Activated B cell treated with CpG ODN at 0.5 μM for 24 hours (primary cell): ENCODE measurements at regions of chr5 and their contacts with region 1.

Region 1: DNA sequence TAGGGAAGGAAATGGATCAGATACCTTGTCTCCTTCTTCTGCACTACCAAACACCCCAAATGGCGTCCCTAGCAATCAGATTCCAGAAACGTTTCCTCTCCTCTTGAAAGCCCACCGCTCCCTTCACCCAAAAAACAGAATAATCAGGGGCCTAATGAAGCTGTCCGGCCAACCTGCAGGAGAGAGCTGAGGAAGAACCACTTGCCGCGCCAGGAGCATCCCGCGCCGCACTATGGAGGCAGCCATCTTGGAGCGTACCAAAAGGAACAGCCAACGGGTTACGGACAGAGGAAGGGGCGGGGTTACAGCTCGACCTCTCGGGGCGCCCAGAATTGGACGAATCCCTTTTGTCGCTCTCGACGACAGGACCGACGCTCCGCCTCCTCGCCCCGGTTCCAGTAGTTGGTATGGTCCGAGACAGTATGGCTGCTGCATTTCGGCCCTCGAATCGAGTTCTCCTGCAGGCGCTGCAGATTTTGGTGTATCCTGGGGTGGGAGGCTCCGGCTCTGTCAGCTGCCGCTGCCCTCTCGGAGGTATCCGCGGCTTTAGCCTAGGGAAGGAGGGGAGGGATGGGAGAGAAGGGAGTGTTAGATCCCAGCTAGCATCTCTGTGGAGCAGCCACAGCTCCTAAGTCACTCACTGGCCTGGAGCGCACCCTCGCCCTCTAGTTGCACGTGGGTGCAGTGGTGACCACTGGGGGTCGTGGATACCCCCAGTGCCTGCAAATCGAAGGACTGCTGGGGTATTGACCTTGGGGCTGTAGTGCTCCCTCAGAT is at the starts of genes MRPS27 and PTCD2:
- DNase-seq: peak; percentile 79
- ATAC-seq: peak; percentile 99
- H3K4me3 Mint-ChIP-seq: peak within 1 kb of the TSS; percentile 98
- H3K27ac Mint-ChIP-seq: peak within 1 kb of the TSS; percentile 93
- H3K4me1 Mint-ChIP-seq: peaks cover 25% of the 10 kb centered on the region
- H3K27me3 Mint-ChIP-seq: no peaks in the 10 kb centered on the region
- CTCF ChIP-seq: no peak
- total RNA-seq, gene MRPS27: 69.2 and 71.6 TPM in 2 replicates
- total RNA-seq, gene PTCD2: 6.2 and 8.9 TPM in 2 replicates

Region 2: DNA sequence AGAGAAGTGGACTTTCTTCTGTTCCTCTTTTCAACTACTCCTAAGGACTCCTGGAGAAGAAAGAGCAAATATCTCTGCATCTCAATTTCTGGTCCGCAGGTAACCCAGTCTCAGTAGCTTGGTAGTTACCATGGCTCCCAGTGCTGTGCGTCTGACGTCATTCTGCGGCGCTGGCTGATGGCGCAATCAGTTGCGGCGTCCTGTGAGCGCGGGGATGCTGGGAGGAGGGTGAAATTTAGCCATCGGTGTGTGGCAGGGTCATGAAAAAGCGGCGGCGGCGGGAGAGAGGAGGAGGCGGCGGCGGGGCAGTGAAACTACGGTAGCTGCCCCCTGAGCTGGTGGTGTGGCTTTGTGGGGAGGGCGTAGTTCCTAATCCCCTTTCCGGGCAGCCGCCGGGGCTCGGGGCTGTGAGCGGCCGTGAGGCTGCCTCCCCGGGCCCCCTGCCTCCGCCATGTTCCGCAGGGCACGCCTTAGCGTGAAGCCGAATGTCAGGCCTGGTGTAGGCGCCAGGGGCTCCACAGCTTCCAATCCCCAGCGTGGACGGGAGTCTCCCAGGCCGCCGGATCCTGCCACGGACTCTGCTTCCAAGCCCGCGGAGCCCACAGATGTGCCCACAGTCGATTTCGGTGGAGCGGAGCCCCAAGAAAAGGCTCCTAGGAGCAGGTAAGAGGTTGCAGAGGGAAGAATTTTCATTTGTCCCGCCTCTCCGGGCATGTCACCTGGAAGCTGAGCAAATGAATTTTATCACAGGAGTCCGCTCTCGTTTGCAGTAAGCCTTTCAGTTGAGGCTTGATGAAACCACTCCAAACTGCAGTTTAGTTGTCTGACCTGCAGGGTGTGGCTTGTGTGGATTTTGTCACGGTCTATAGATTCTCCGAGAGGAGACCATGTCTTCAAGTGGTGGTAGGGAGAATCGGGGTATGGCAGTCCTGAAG is 864.5 kb before region 1 on chr5 and contains the start of gene BDP1:
- CTCF ChIA-PET with region 1: no interaction called
- POLR2A ChIA-PET with region 1: no interaction called
- intact Hi-C with region 1: loop called (anchors 5 kb)
- DNase-seq: peak; percentile 96
- ATAC-seq: peak; percentile 84
- H3K4me3 Mint-ChIP-seq: peak within 1 kb of the TSS; percentile 97
- H3K27ac Mint-ChIP-seq: peak within 1 kb of the TSS; percentile 97
- H3K4me1 Mint-ChIP-seq: peaks cover 23% of the 10 kb centered on the region
- H3K27me3 Mint-ChIP-seq: peaks cover 7% of the 10 kb centered on the region
- CTCF ChIP-seq: no peak
- total RNA-seq, gene BDP1: 46.2 and 50.4 TPM in 2 replicates

Region 3: DNA sequence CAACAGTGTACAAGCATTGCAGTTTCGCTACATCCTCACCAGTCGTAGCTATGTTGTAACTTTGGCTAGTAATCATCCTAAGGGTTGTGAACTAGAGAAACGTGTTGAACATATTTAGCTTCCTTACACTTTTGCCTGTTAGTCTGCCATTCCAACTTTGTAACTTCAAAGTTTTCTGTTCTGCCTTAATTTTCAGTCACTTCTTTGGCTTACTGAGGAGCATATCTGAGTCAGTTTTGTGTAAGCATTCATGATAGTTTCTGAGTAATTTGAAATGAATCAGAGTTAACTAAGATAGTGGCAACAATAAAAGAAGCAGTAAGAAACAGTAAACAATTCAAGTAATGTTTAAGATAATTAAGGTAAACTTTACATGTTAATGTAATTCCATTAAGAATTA is 792.0 kb before region 1 on chr5:
- CTCF ChIA-PET with region 1: no interaction called
- POLR2A ChIA-PET with region 1: interaction called, 10 read pairs
- intact Hi-C with region 1: no loop called
- DNase-seq: no peak
- ATAC-seq: no peak
- H3K4me3 Mint-ChIP-seq: no peak overlapping the region
- H3K27ac Mint-ChIP-seq: no peak overlapping the region
- H3K4me1 Mint-ChIP-seq: no peaks in the 10 kb centered on the region
- H3K27me3 Mint-ChIP-seq: no peaks in the 10 kb centered on the region
- CTCF ChIP-seq: no peak

Region 4: DNA sequence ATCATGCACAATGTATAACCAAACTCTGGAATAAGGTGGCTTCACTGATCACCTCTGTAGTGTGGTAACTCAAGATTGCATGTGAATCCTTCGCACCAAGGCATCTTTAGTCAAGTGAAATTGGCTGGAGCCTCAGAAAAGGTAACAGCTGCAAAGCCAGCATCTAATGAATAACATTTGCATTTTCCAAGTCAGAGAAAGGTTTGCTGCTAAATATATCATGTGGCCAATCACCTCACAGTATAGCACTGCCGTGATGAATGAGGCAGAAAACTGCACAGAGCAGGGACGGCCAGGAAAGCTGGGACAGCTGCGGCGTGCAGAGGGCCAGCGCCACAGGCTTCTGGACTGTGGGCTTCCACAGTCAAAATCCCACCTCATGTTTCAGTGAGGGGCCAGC is 18.6 kb before region 1 on chr5:
- CTCF ChIA-PET with region 1: interaction called, 3 read pairs
- POLR2A ChIA-PET with region 1: interaction called, 15 read pairs
- intact Hi-C with region 1: no loop called
- DNase-seq: no peak
- ATAC-seq: peak; percentile 62
- H3K4me3 Mint-ChIP-seq: peak overlapping the region; percentile 29
- H3K27ac Mint-ChIP-seq: peak overlapping the region; percentile 14
- H3K4me1 Mint-ChIP-seq: peaks cover 93% of the 10 kb centered on the region
- H3K27me3 Mint-ChIP-seq: no peaks in the 10 kb centered on the region
- CTCF ChIP-seq: no peak

Region 5: DNA sequence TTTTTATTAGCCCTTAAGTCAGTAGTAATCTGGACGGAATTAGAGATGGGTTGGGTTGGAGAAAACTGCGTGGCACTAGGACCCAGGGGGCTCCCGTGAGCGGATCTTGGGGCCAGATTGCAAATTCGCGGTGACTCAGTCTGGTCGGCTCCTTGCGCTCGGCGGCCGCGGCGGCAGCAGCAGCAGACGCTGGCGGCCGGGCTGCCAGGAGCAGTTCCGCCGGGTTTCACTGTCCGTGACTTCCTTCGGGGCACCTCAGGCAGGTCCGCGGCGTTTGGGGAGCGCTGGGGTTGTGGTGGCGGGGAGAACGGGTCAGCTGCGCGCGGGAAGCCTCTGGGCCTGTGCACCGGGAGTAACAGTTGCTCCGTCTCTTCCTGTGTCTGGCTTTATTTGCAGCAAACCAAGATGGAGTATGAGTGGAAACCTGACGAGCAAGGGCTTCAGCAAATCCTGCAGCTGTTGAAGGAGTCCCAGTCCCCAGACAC is 527.9 kb after region 1 on chr5:
- CTCF ChIA-PET with region 1: no interaction called
- POLR2A ChIA-PET with region 1: interaction called, 7 read pairs
- intact Hi-C with region 1: loop called (anchors 1 kb)
- DNase-seq: peak; percentile 82
- ATAC-seq: peak; percentile 73
- H3K4me3 Mint-ChIP-seq: peak overlapping the region; percentile 96
- H3K27ac Mint-ChIP-seq: peak overlapping the region; percentile 96
- H3K4me1 Mint-ChIP-seq: peaks cover 56% of the 10 kb centered on the region
- H3K27me3 Mint-ChIP-seq: no peaks in the 10 kb centered on the region
- CTCF ChIP-seq: no peak

Region 6: DNA sequence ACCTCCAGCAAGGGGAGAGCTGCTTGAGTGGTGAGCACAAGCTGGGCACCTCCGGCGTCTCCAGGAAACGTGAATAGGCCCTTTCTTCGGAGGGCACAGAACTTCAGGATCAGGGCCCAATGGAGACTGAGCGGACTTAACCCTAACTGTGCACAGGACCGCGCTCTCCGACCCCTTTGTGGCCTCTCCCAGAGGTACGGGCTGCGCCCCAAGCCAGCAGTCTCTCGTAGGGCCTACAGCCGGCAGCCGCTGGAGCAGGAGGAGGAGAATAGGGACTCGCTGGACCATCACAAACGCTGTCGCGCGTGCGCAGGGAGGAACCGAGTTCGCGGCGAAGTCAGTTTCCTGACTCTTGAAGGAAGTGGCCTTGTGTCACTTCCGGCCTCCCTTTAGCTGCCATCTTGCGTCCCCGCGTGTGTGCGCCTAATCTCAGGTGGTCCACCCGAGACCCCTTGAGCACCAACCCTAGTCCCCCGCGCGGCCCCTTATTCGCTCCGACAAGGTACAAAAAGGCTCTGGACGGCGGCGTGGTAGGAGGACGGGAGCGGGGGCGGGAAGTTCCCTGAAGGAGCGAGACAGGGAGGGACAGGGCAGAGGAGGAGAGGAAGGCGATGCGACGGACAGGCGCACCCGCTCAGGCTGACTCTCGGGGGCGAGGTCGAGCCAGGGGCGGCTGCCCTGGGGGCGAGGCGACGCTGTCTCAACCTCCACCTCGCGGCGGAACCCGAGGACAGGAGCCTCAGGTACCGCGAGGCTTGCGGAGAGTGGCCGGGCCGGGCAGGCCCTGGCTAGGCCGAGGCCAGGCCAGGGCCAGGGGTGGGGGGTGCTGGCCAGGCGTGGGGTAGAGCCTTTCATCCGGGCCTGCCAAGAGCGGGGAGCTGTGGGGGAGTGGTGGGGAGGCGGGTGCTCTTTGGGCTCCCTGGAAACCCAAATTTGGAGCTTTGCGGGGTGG is 1178.2 kb after region 1 on chr5 and contains the start of gene BTF3:
- CTCF ChIA-PET with region 1: no interaction called
- POLR2A ChIA-PET with region 1: no interaction called
- intact Hi-C with region 1: loop called (anchors 1 kb)
- DNase-seq: peak; percentile 88
- ATAC-seq: peak; percentile 96
- H3K4me3 Mint-ChIP-seq: peak within 1 kb of the TSS; percentile 97
- H3K27ac Mint-ChIP-seq: peak within 1 kb of the TSS; percentile 97
- H3K4me1 Mint-ChIP-seq: peaks cover 33% of the 10 kb centered on the region
- H3K27me3 Mint-ChIP-seq: peaks cover 4% of the 10 kb centered on the region
- CTCF ChIP-seq: no peak
- total RNA-seq, gene BTF3: 753 and 798 TPM in 2 replicates